H1 (cell line): ENCODE measurements at regions of chr11 and their contacts with region 1.

Region 1: DNA sequence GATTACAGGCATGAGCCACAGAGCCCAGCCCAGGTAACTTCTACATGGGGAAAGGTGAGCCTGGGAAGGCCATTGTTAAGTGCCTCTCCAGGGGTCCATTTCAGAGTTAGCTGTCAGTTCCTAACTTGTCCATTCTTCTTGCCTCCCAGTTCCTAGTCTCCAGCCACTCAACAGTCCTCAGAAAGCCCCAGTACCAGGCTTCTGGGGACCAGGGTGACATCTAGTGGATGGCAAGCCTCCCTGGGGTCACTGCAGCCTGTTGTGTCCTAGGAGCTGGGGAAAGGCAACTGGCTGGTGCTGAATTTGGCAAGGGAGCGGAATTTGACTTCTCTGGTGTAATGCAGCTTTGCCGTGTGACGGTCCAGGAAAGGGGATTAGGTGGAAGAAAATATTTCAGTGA is 2.1 kb downstream of the LGALS12 start:
- DNase-seq: peak in 1 of 2 experiments; percentile 54
- H3K4me3 ChIP-seq: no peak overlapping the region
- H3K27ac ChIP-seq: no peak overlapping the region
- H3K4me1 ChIP-seq: peaks cover 9 to 21% (median 15%) of the 10 kb centered on the region in 4 experiments
- H3K27me3 ChIP-seq: no peaks in the 10 kb centered on the region
- CTCF ChIP-seq: peak; percentile 62 to 71 (median 71)
- EP300 ChIP-seq: no peak
- POLR2A ChIP-seq: no peak
- RAD21 ChIP-seq: peak; percentile 71 to 82

Region 2: GRCh38 chr11:63404161-63404935 is 103.7 kb before region 1 on chr11:
- CTCF ChIA-PET with region 1: no interaction called
- POLR2A ChIA-PET with region 1: no interaction called
- DNase-seq: no peak
- H3K4me3 ChIP-seq: no peak overlapping the region
- H3K27ac ChIP-seq: no peak overlapping the region
- H3K4me1 ChIP-seq: no peaks in the 10 kb centered on the region
- H3K27me3 ChIP-seq: no peaks in the 10 kb centered on the region
- CTCF ChIP-seq: no peak
- EP300 ChIP-seq: no peak
- POLR2A ChIP-seq: no peak
- RAD21 ChIP-seq: no peak

Region 3: DNA sequence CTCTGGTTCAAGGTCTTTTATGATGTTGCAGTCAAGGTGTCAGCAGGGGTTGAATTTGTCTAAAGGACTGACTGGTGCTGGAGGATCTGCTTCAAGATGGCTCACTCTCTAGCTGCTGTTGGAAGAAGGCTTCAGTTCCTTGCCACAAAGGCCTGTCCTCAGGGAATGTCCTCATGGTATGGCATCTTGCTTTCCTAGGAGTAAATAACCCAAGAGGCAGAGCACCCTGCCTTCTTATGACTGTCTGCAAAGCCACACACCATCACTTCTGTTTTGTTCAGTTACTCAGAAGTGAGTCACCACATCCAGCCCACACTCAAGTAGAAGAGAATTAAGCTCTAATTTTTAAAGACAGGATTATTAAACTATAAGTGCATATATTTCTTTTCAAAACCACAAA is 62.3 kb before region 1 on chr11:
- CTCF ChIA-PET with region 1: no interaction called
- POLR2A ChIA-PET with region 1: no interaction called
- DNase-seq: no peak
- H3K4me3 ChIP-seq: no peak overlapping the region
- H3K27ac ChIP-seq: no peak overlapping the region
- H3K4me1 ChIP-seq: peaks cover 2 to 13% (median 2%) of the 10 kb centered on the region in 4 experiments; a peak in 5 of 7 replicates
- H3K27me3 ChIP-seq: no peaks in the 10 kb centered on the region
- CTCF ChIP-seq: no peak
- EP300 ChIP-seq: no peak
- POLR2A ChIP-seq: no peak
- RAD21 ChIP-seq: no peak

Region 4: GRCh38 chr11:63490551-63491239 is 17.3 kb before region 1 on chr11 and contains the start of gene PLAAT5:
- CTCF ChIA-PET with region 1: interaction called, 54 read pairs
- POLR2A ChIA-PET with region 1: interaction called, 9 read pairs
- DNase-seq: peak in 1 of 2 experiments; percentile 73
- H3K4me3 ChIP-seq: peak within 1 kb of the TSS; percentile 53 to 69 (median 61)
- H3K27ac ChIP-seq: 0 out of 2 replicates have a peak within 1 kb of the TSS, but pooled peaks have one; percentile 23
- H3K4me1 ChIP-seq: peaks cover 6 to 10% (median 9%) of the 10 kb centered on the region in 4 experiments; a peak in 5 of 7 replicates
- H3K27me3 ChIP-seq: no peaks in the 10 kb centered on the region; a peak in 1 of 7 replicates
- CTCF ChIP-seq: no peak
- EP300 ChIP-seq: no peak
- POLR2A ChIP-seq: no peak; a peak in 1 of 3 replicates
- RAD21 ChIP-seq: no peak
- total RNA-seq, gene PLAAT5: 12.8 and 16.0 TPM in 2 replicates

Region 5: DNA sequence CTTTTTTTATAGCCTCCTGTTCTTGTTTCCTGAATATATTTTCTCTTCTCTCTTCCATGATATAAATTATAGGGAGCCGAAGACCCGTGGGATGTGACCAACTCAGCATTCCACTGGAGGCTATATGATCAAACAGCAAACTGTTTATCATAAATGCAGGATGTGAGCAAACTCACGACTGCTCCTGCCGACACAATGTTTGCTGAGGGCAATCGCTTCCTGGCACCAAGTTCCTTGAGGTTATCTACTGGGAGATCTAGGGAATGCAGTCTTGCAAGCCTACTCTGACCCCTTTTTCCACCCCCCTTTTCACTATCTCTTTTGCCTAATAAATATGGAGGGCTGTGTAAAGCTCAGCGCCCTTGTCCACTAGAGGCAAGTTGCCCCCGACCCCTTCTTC is 15.1 kb after region 1 on chr11:
- CTCF ChIA-PET with region 1: interaction called, 11 read pairs
- POLR2A ChIA-PET with region 1: interaction called, 4 read pairs
- DNase-seq: no peak
- H3K4me3 ChIP-seq: no peak overlapping the region
- H3K27ac ChIP-seq: no peak overlapping the region
- H3K4me1 ChIP-seq: peaks cover 0 to 7% (median 3%) of the 10 kb centered on the region in 4 experiments; a peak in 2 of 7 replicates
- H3K27me3 ChIP-seq: no peaks in the 10 kb centered on the region
- CTCF ChIP-seq: no peak
- EP300 ChIP-seq: no peak
- POLR2A ChIP-seq: no peak
- RAD21 ChIP-seq: no peak

Region 6: GRCh38 chr11:63530021-63530420 is 22.0 kb after region 1 on chr11:
- CTCF ChIA-PET with region 1: interaction called, 11 read pairs
- POLR2A ChIA-PET with region 1: interaction called, 17 read pairs
- DNase-seq: no peak
- H3K4me3 ChIP-seq: peak overlapping the region in 3 of 4 experiments; percentile 11 to 37 (median 22); a peak in 4 of 8 replicates
- H3K27ac ChIP-seq: peak overlapping the region; percentile 89
- H3K4me1 ChIP-seq: peaks cover 16 to 31% (median 30%) of the 10 kb centered on the region in 4 experiments; a peak in 6 of 7 replicates
- H3K27me3 ChIP-seq: no peaks in the 10 kb centered on the region
- CTCF ChIP-seq: no peak
- EP300 ChIP-seq: no peak
- POLR2A ChIP-seq: no peak
- RAD21 ChIP-seq: no peak